ENCODE measurements at regions of chrX and their contacts with region 1.

Region 1: GRCh38 chrX:130704053-130705038 is 198.7 kb downstream of the ENOX2 start:
- DNase-seq: no peak
- H3K4me3 ChIP-seq: no peak overlapping the region
- H3K27ac ChIP-seq: peak overlapping the region; percentile 46 to 71
- H3K4me1 ChIP-seq: no peaks in the 10 kb centered on the region
- H3K27me3 ChIP-seq: no peaks in the 10 kb centered on the region
- CTCF ChIP-seq: no peak

Region 2: DNA sequence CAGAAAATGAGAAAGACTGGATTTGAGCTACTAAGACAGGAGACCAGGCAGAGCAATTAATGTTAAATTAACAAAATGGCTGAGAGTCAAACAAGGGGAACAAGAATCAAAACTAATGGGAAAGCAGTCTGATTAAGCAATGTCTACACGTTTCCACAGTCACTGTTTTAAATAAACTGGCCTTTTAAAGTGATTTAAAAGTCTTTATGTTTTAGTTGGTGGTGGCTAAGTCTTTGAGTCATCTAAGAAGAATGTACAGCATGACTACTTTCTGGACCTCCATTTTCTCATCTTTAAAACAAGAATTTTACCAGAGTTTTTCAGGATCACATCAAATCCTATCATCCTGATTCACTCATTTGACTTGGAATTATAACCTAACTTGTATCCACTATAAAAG is 35.1 kb before region 1 on chrX:
- intact Hi-C with region 1: loop called (anchors 2 kb)
- DNase-seq: no peak
- H3K4me3 ChIP-seq: no peak overlapping the region
- H3K27ac ChIP-seq: peak overlapping the region; percentile 41 to 71
- H3K4me1 ChIP-seq: peaks cover 0 to 8% of the 10 kb centered on the region in 2 donors
- H3K27me3 ChIP-seq: no peaks in the 10 kb centered on the region
- CTCF ChIP-seq: no peak

Region 3: DNA sequence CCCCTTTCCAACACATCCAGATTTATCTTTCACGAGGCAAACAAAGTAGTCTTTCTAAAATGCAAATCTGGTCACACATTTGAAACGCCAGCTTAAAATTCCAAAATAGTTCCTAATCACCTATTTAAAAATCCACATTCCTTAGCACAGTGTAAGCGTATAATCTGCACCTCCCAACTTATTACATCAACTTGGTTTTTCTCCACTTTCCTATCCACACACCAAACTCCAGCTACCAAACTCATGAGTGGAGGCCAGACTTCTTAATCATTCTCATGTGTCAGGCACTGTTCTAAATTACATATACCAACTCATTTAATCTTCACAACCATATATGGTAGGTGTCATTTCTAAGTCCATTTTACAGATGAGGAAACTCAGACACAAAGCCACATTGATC is 164.9 kb after region 1 on chrX:
- intact Hi-C with region 1: no loop called
- DNase-seq: no peak
- H3K4me3 ChIP-seq: no peak overlapping the region
- H3K27ac ChIP-seq: no peak overlapping the region
- H3K4me1 ChIP-seq: no peaks in the 10 kb centered on the region
- H3K27me3 ChIP-seq: no peaks in the 10 kb centered on the region
- CTCF ChIP-seq: no peak

Measured in ascending aorta (tissue), 2 donors.